ENCODE measurements at regions of chr10 and their contacts with region 1.

Region 1: DNA sequence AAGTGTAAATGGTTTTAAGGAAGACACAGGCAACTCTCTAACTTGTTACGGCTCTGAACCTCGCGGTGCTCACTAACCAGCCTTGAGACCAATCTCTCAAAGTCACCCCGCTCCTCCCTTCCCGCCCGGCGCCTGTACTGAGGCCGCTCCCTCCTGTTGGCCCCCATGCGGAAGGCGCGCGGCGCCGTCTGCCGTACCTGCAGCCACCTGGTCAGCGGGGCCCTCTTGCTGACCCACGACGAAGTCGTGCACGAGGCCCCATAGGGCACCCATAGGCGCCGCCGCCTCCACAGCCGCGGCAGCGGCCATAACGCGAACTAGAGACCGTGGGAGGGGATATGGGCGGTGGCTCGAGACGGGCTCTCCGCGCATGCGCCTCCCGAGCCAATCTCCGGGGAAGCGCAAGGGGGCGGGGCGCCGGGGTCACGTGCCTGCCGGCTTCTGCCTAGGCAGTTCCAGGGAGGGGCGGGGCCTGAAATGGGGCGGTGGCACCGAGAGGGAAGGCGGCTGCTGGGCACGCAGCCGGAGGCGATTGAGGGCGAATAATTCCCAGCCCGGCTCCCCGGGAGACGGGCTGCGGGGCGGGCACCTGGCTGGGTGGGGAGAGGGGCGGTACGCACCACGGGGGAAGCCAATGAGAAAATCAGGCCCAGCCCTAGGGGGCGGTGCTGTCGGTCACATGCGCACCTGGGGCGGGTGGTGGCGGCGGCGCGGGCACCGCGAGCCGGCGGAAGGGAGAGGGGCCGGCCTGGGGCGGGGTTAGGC is at the start of gene MMS19:
- DNase-seq: peak; percentile 99 to 100 (median 99)
- H3K4me3 ChIP-seq: peak within 1 kb of the TSS; percentile 86 to 97
- H3K4me3 Mint-ChIP-seq: peak within 1 kb of the TSS; percentile 96 to 100 (median 98)
- H3K27ac ChIP-seq: peak within 1 kb of the TSS; percentile 85
- H3K27ac Mint-ChIP-seq: peak within 1 kb of the TSS; percentile 96 to 99 (median 97)
- H3K4me1 ChIP-seq: peaks cover 48% of the 10 kb centered on the region
- H3K4me1 Mint-ChIP-seq: peaks cover 28 to 54% (median 44%) of the 10 kb centered on the region in 4 donors
- H3K27me3 ChIP-seq: peaks cover under 1% of the 10 kb centered on the region
- H3K27me3 Mint-ChIP-seq: peaks cover 7 to 8% of the 10 kb centered on the region in 2 donors
- total RNA-seq, gene MMS19: 109 to 111 TPM

Region 2: GRCh38 chr10:97318772-97319651 is 179.2 kb before region 1 on chr10 and contains the start of gene FRAT1:
- CTCF ChIA-PET with region 1: no interaction called
- POLR2A ChIA-PET with region 1: interaction called, 5 read pairs
- intact Hi-C with region 1: loop called (anchors 1 kb)
- DNase-seq: peak; percentile 90 to 97 (median 94)
- H3K4me3 ChIP-seq: peak within 1 kb of the TSS; percentile 50 to 84
- H3K4me3 Mint-ChIP-seq: peak within 1 kb of the TSS; percentile 93 to 99 (median 96)
- H3K27ac ChIP-seq: peak within 1 kb of the TSS; percentile 99
- H3K27ac Mint-ChIP-seq: peak within 1 kb of the TSS; percentile 96 to 100 (median 99)
- H3K4me1 ChIP-seq: peaks cover 21% of the 10 kb centered on the region
- H3K4me1 Mint-ChIP-seq: peaks cover 16 to 44% (median 31%) of the 10 kb centered on the region in 4 donors
- H3K27me3 ChIP-seq: no peaks in the 10 kb centered on the region
- H3K27me3 Mint-ChIP-seq: peaks cover 0 to 3% of the 10 kb centered on the region in 2 donors
- total RNA-seq, gene FRAT1: 20.2 to 21.8 TPM

Region 3: DNA sequence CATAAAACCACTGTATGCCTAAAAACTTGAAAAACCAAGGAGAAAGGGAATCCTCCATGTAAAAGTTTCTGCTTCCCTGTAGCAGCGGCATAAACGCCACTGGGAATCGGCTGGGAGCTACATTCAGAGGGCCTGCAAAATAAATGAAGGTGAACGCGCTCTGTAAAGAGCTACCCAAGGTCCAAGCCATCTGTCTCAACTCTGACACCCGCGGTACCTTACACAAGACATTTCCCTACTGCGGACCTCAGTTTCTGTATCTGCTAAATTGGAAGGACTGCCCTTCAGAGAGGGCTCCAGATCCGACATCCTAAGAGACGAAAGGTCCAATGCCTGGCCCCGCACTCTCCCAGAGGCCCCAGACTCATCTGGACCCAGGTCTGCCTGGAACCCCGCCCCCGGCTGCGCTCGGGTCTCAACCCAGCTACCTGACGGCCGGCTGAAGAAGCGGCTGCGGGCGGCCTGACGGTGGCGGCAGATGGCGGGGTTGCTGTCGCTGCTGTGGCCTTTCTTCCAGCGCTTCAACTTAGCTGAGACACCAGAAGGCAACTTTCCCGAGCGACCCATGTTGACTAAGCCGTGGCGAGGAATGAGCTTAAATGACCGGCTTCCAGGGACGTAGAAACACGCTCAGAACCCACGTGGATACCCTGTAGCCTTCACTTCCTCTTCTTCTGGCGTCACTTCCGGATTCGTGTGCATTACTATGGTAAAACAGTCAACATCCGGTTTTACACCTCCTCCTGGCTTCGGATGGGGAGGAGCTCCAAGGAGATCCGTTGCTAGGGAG is 97.4 kb before region 1 on chr10 and contains the start of gene RRP12:
- CTCF ChIA-PET with region 1: no interaction called
- POLR2A ChIA-PET with region 1: interaction called, 10 read pairs
- intact Hi-C with region 1: loop called (anchors 1 kb)
- DNase-seq: peak; percentile 89 to 97 (median 95)
- H3K4me3 ChIP-seq: peak within 1 kb of the TSS; percentile 71
- H3K4me3 Mint-ChIP-seq: peak within 1 kb of the TSS; percentile 95 to 99 (median 96)
- H3K27ac ChIP-seq: peak within 1 kb of the TSS; percentile 88
- H3K27ac Mint-ChIP-seq: peak within 1 kb of the TSS; percentile 94 to 99 (median 99)
- H3K4me1 ChIP-seq: peaks cover 15% of the 10 kb centered on the region
- H3K4me1 Mint-ChIP-seq: peaks cover 11 to 23% (median 15%) of the 10 kb centered on the region in 4 donors
- H3K27me3 ChIP-seq: no peaks in the 10 kb centered on the region
- H3K27me3 Mint-ChIP-seq: no peaks in the 10 kb centered on the region
- total RNA-seq, gene RRP12: 18.2 to 20.0 TPM

Region 4: GRCh38 chr10:97425964-97426775 is 72.1 kb before region 1 on chr10 and contains the start of gene PGAM1:
- CTCF ChIA-PET with region 1: no interaction called
- POLR2A ChIA-PET with region 1: interaction called, 3 read pairs
- intact Hi-C with region 1: loop called (anchors 1 kb)
- DNase-seq: peak; percentile 94 to 99 (median 98)
- H3K4me3 ChIP-seq: peak within 1 kb of the TSS; percentile 62 to 70
- H3K4me3 Mint-ChIP-seq: peak within 1 kb of the TSS; percentile 90 to 98 (median 94)
- H3K27ac ChIP-seq: peak within 1 kb of the TSS; percentile 83
- H3K27ac Mint-ChIP-seq: peak within 1 kb of the TSS; percentile 94 to 98 (median 97)
- H3K4me1 ChIP-seq: peaks cover 42% of the 10 kb centered on the region
- H3K4me1 Mint-ChIP-seq: peaks cover 26 to 61% (median 37%) of the 10 kb centered on the region in 4 donors
- H3K27me3 ChIP-seq: no peaks in the 10 kb centered on the region
- H3K27me3 Mint-ChIP-seq: peaks cover 0 to 2% of the 10 kb centered on the region in 2 donors
- total RNA-seq, gene PGAM1: 95.7 to 102 TPM

Region 5: GRCh38 chr10:97463363-97464132 is 34.7 kb before region 1 on chr10:
- CTCF ChIA-PET with region 1: interaction called, 4 read pairs
- POLR2A ChIA-PET with region 1: interaction called, 3 read pairs
- intact Hi-C with region 1: loop called (anchors 1 kb)
- DNase-seq: peak; percentile 31 to 52 (median 42)
- H3K4me3 ChIP-seq: no peak overlapping the region
- H3K4me3 Mint-ChIP-seq: no peak overlapping the region
- H3K27ac ChIP-seq: no peak overlapping the region
- H3K27ac Mint-ChIP-seq: peak overlapping the region; percentile 12 to 77 (median 37)
- H3K4me1 ChIP-seq: no peaks in the 10 kb centered on the region
- H3K4me1 Mint-ChIP-seq: peaks cover 0 to 2% (median 0%) of the 10 kb centered on the region in 4 donors
- H3K27me3 ChIP-seq: no peaks in the 10 kb centered on the region
- H3K27me3 Mint-ChIP-seq: no peaks in the 10 kb centered on the region

Region 6: GRCh38 chr10:97632949-97633884 is 135.0 kb after region 1 on chr10 and contains the start of gene MORN4:
- CTCF ChIA-PET with region 1: no interaction called
- POLR2A ChIA-PET with region 1: no interaction called
- intact Hi-C with region 1: loop called (anchors 1 kb)
- DNase-seq: peak; percentile 91 to 92 (median 91)
- H3K4me3 ChIP-seq: peak within 1 kb of the TSS; percentile 53 to 55
- H3K4me3 Mint-ChIP-seq: peak within 1 kb of the TSS; percentile 92 to 99 (median 97)
- H3K27ac ChIP-seq: peak within 1 kb of the TSS; percentile 36
- H3K27ac Mint-ChIP-seq: peak within 1 kb of the TSS; percentile 83 to 97 (median 91)
- H3K4me1 ChIP-seq: peaks cover 10% of the 10 kb centered on the region
- H3K4me1 Mint-ChIP-seq: peaks cover 7 to 19% (median 14%) of the 10 kb centered on the region in 4 donors
- H3K27me3 ChIP-seq: no peaks in the 10 kb centered on the region
- H3K27me3 Mint-ChIP-seq: no peaks in the 10 kb centered on the region
- total RNA-seq, gene MORN4: 2.1 to 3.0 TPM

Region 7: DNA sequence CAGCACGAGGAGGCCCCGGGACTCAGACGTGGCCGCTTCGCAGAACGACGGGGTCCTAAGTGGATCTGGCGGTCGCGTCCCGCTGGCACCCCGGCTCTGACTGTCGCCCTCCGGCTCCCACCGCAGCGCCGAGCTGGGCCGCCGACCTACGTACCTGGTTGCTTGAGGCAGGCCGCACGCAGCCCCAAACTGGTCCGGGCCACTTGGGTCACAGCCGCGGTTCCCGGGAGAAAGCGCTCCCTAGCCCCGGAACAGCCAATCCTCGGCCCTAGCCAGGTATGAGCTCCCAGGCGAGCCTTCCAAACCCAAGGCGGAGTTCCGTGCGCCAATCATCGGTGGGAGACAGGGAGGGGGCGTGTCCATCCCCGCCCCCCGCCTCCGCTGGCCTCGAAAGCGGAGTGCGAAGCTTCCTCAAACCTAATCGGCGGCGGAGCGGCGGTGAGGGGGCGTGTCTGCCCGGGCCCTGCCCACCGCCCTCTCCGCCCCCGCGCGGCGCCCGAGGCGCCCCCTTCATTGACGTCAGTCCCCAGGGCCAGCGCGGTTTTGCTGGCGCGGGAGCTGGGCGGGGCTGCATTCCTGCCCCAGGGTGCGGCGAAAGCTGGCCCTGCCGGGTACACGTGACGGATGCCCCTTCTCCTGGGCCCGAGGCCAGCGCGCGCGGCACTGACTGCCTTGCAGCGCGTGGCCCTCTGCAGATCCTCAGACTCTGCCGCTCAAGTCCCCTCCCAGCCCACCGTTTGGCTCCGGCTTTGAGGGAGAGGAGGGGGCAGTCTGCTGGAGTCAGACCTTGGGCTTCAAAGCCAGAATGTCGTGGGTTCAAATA is 188.9 kb after region 1 on chr10 and contains the start of gene AVPI1:
- CTCF ChIA-PET with region 1: no interaction called
- POLR2A ChIA-PET with region 1: no interaction called
- intact Hi-C with region 1: loop called (anchors 2 kb)
- DNase-seq: peak; percentile 96 to 97 (median 97)
- H3K4me3 ChIP-seq: peak within 1 kb of the TSS; percentile 86 to 87
- H3K4me3 Mint-ChIP-seq: peak within 1 kb of the TSS; percentile 84 to 92 (median 88)
- H3K27ac ChIP-seq: peak within 1 kb of the TSS; percentile 71
- H3K27ac Mint-ChIP-seq: peak within 1 kb of the TSS; percentile 64 to 96 (median 92)
- H3K4me1 ChIP-seq: peaks cover 29% of the 10 kb centered on the region
- H3K4me1 Mint-ChIP-seq: peaks cover 5 to 15% (median 10%) of the 10 kb centered on the region in 4 donors
- H3K27me3 ChIP-seq: no peaks in the 10 kb centered on the region
- H3K27me3 Mint-ChIP-seq: no peaks in the 10 kb centered on the region
- total RNA-seq, gene AVPI1: 1.9 to 2.2 TPM

Measured in CD4-positive, alpha-beta memory T cell (primary cell).